B cell (primary cell): ENCODE measurements at regions of chr19 and their contacts with region 1.

Region 1: DNA sequence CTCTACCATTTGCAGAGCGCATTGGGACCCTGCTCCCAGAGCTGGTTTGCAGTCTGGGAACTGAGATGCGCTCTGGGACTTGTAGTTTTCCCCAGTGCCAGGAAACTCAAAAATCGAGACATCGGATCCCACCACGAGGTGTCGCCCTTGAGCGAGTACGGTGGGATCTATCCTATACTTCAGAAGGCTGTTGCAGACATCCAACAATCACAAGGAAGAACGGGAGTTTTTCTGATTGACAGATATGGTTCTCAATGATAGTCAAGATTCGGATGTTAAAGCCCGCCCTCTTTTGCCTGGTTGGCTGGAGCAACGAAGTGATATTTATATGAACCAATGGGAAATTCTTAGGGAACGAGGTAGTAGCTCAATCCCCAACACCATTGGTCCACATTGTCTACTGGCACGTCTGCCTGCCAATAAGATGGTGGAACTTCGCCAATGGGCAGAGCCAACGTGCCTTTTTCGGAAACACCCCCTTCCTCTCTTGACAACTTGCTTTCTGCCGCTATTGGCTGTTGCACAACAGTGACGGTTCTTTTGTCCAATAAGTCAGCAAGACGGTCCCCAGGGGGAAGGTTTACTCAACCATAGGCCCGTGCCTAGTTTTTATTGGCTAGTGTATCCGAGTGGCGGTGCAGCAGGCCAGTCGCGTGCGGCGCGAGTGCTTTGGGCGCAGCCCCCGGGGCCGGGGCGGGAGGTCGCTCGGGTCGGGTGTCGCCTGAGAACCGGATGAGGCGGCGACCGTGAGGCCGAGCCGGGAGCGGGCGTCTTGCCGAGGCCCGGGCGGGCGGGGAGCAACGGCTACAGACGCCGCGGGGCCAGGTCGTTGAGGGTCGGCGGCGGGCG is at the start of gene DNM2:
- DNase-seq: peak; percentile 100
- ATAC-seq: peak; percentile 84
- H3K4me3 ChIP-seq: peak within 1 kb of the TSS; percentile 75 to 96 (median 84)
- H3K4me3 Mint-ChIP-seq: peak within 1 kb of the TSS; percentile 95
- H3K27ac ChIP-seq: peak within 1 kb of the TSS; percentile 47 to 89
- H3K27ac Mint-ChIP-seq: peak within 1 kb of the TSS; percentile 92
- H3K4me1 ChIP-seq: peaks cover 18 to 49% of the 10 kb centered on the region in 2 donors
- H3K4me1 Mint-ChIP-seq: peaks cover 50% of the 10 kb centered on the region
- H3K27me3 ChIP-seq: no peaks in the 10 kb centered on the region
- H3K27me3 Mint-ChIP-seq: no peaks in the 10 kb centered on the region
- CTCF ChIP-seq: peak; percentile 77
- total RNA-seq, gene DNM2: 353 and 393 TPM in 2 replicates

Region 2: GRCh38 chr19:10368101-10368803 is 349.3 kb before region 1 on chr19:
- CTCF ChIA-PET with region 1: no interaction called
- POLR2A ChIA-PET with region 1: no interaction called
- intact Hi-C with region 1: no loop called
- DNase-seq: no peak
- ATAC-seq: no peak
- H3K4me3 ChIP-seq: no peak overlapping the region
- H3K4me3 Mint-ChIP-seq: no peak overlapping the region
- H3K27ac ChIP-seq: no peak overlapping the region
- H3K27ac Mint-ChIP-seq: no peak overlapping the region
- H3K4me1 ChIP-seq: peaks cover under 1 to 3% of the 10 kb centered on the region in 2 donors
- H3K4me1 Mint-ChIP-seq: no peaks in the 10 kb centered on the region
- H3K27me3 ChIP-seq: no peaks in the 10 kb centered on the region
- H3K27me3 Mint-ChIP-seq: no peaks in the 10 kb centered on the region
- CTCF ChIP-seq: no peak

Region 3: GRCh38 chr19:10533646-10534386 is 183.8 kb before region 1 on chr19:
- CTCF ChIA-PET with region 1: no interaction called
- POLR2A ChIA-PET with region 1: no interaction called
- intact Hi-C with region 1: no loop called
- DNase-seq: no peak
- ATAC-seq: no peak
- H3K4me3 ChIP-seq: no peak overlapping the region
- H3K4me3 Mint-ChIP-seq: no peak overlapping the region
- H3K27ac ChIP-seq: no peak overlapping the region
- H3K27ac Mint-ChIP-seq: no peak overlapping the region
- H3K4me1 ChIP-seq: no peaks in the 10 kb centered on the region
- H3K4me1 Mint-ChIP-seq: peaks cover under 1% of the 10 kb centered on the region
- H3K27me3 ChIP-seq: peaks cover 0 to 12% (median 1%) of the 10 kb centered on the region in 4 experiments
- H3K27me3 Mint-ChIP-seq: peaks cover 16% of the 10 kb centered on the region
- CTCF ChIP-seq: no peak

Region 4: DNA sequence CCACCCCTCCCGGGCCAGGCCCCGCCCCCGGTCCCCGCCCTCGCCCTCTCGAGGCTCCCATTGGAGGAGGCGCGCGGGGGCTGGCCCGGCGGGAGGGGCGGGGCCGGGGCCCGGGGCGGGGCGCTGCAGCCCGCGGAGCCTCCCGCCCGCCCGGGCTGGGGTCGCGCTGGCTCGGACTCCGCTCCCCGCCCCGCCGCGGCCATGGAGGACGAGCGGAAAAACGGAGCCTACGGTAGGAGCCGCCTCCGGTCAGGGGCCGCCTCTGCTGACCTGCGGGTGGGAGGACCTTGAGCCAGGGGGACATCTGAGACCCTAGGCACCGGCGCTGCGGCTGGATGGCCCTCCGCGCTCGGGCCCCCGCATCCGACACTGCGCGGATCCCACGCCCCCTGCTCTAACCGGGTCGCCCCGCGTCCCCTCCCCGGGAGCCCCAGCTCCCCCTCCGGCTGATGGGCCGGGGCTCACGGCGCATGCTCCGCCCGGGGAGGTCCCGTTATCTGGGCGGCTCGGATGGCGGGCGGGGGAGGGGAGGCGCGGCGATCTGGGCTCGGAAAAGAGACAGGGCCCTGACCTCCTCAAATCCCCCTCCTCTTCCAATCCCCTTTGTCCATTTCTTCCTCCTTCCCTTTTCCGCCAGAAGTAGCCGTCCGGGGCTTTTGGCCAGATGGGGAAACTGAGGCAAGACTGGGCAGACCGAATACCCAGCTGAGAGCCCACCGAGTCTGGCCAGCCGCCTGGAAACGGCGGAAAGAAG is 115.1 kb before region 1 on chr19:
- CTCF ChIA-PET with region 1: no interaction called
- POLR2A ChIA-PET with region 1: no interaction called
- intact Hi-C with region 1: no loop called
- DNase-seq: peak; percentile 86
- ATAC-seq: peak; percentile 73
- H3K4me3 ChIP-seq: peak overlapping the region; percentile 89 to 100 (median 94)
- H3K4me3 Mint-ChIP-seq: peak overlapping the region; percentile 96
- H3K27ac ChIP-seq: peak overlapping the region; percentile 97 to 99
- H3K27ac Mint-ChIP-seq: peak overlapping the region; percentile 99
- H3K4me1 ChIP-seq: peaks cover 30 to 47% of the 10 kb centered on the region in 2 donors
- H3K4me1 Mint-ChIP-seq: peaks cover 37% of the 10 kb centered on the region
- H3K27me3 ChIP-seq: no peaks in the 10 kb centered on the region
- H3K27me3 Mint-ChIP-seq: no peaks in the 10 kb centered on the region
- CTCF ChIP-seq: no peak

Region 5: GRCh38 chr19:10685210-10685609 is 32.4 kb before region 1 on chr19:
- CTCF ChIA-PET with region 1: no interaction called
- POLR2A ChIA-PET with region 1: no interaction called
- intact Hi-C with region 1: no loop called
- DNase-seq: no peak
- ATAC-seq: no peak
- H3K4me3 ChIP-seq: no peak overlapping the region
- H3K4me3 Mint-ChIP-seq: no peak overlapping the region
- H3K27ac ChIP-seq: no peak overlapping the region
- H3K27ac Mint-ChIP-seq: no peak overlapping the region
- H3K4me1 ChIP-seq: no peaks in the 10 kb centered on the region
- H3K4me1 Mint-ChIP-seq: no peaks in the 10 kb centered on the region
- H3K27me3 ChIP-seq: no peaks in the 10 kb centered on the region
- H3K27me3 Mint-ChIP-seq: no peaks in the 10 kb centered on the region
- CTCF ChIP-seq: no peak

Region 6: GRCh38 chr19:10695401-10696398 is 21.9 kb before region 1 on chr19:
- CTCF ChIA-PET with region 1: interaction called, 25 read pairs
- POLR2A ChIA-PET with region 1: interaction called, 10 read pairs
- intact Hi-C with region 1: loop called (anchors 2 kb)
- DNase-seq: peak; percentile 90
- ATAC-seq: peak; percentile 98
- H3K4me3 ChIP-seq: peak overlapping the region; percentile 6 to 54 (median 25)
- H3K4me3 Mint-ChIP-seq: peak overlapping the region; percentile 80
- H3K27ac ChIP-seq: no peak overlapping the region
- H3K27ac Mint-ChIP-seq: peak overlapping the region; percentile 67
- H3K4me1 ChIP-seq: peaks cover 10 to 15% of the 10 kb centered on the region in 2 donors
- H3K4me1 Mint-ChIP-seq: peaks cover 17% of the 10 kb centered on the region
- H3K27me3 ChIP-seq: no peaks in the 10 kb centered on the region
- H3K27me3 Mint-ChIP-seq: no peaks in the 10 kb centered on the region
- CTCF ChIP-seq: no peak

Region 7: DNA sequence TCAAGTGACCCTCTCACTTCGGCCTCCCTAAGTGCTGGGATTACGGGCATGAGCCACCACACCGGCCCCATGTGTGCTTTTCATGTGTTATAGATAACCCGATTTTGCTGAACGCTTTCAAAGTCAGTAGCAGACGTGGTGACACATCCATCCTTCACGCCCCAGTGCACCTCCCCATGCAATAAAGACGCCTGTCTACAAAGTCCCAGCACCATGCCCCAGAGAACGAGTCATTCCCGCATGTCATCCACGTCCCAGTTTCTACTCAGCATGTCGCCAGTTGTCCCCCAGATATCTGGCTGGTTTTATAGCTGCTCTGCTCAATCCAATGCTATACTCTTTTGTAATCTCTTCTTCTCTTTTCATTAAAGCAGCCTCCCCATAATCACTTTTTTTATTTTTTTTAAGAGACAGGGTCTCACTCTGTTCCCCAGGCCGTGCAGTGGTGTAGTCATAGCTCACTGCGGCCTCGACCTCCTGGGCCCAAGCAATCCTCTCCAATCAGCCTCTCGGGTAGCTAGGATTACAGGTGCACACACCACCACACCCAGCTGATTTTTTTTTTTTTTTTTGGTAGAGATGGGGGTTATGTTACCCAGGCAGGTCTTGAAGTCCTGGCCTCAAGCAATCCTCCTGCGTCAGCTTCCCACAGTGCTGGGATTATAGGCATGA is 42.8 kb after region 1 on chr19:
- CTCF ChIA-PET with region 1: interaction called, 31 read pairs
- POLR2A ChIA-PET with region 1: interaction called, 23 read pairs
- intact Hi-C with region 1: loop called (anchors 1 kb)
- DNase-seq: peak; percentile 78
- ATAC-seq: peak; percentile 56
- H3K4me3 ChIP-seq: peak overlapping the region in 4 of 5 experiments; percentile 14 to 57 (median 28)
- H3K4me3 Mint-ChIP-seq: peak overlapping the region; percentile 85
- H3K27ac ChIP-seq: peak overlapping the region; percentile 86 to 92
- H3K27ac Mint-ChIP-seq: peak overlapping the region; percentile 94
- H3K4me1 ChIP-seq: peaks cover 63 to 92% of the 10 kb centered on the region in 2 donors
- H3K4me1 Mint-ChIP-seq: peaks cover 82% of the 10 kb centered on the region
- H3K27me3 ChIP-seq: no peaks in the 10 kb centered on the region
- H3K27me3 Mint-ChIP-seq: no peaks in the 10 kb centered on the region
- CTCF ChIP-seq: no peak

Region 8: GRCh38 chr19:10797541-10798256 is 80.1 kb after region 1 on chr19:
- CTCF ChIA-PET with region 1: interaction called, 8 read pairs
- POLR2A ChIA-PET with region 1: no interaction called
- intact Hi-C with region 1: loop called (anchors 1 kb)
- DNase-seq: peak; percentile 49
- ATAC-seq: peak; percentile 87
- H3K4me3 ChIP-seq: no peak overlapping the region
- H3K4me3 Mint-ChIP-seq: peak overlapping the region; percentile 39
- H3K27ac ChIP-seq: peak overlapping the region in 1 of 2 donors; percentile 9
- H3K27ac Mint-ChIP-seq: peak overlapping the region; percentile 89
- H3K4me1 ChIP-seq: peaks cover 0 to 16% of the 10 kb centered on the region in 2 donors
- H3K4me1 Mint-ChIP-seq: peaks cover 13% of the 10 kb centered on the region
- H3K27me3 ChIP-seq: no peaks in the 10 kb centered on the region
- H3K27me3 Mint-ChIP-seq: no peaks in the 10 kb centered on the region
- CTCF ChIP-seq: no peak

Region 9: GRCh38 chr19:10858204-10858828 is 140.7 kb after region 1 on chr19:
- CTCF ChIA-PET with region 1: interaction called, 58 read pairs
- POLR2A ChIA-PET with region 1: interaction called, 4 read pairs
- intact Hi-C with region 1: no loop called
- DNase-seq: peak; percentile 47
- ATAC-seq: no peak
- H3K4me3 ChIP-seq: no peak overlapping the region
- H3K4me3 Mint-ChIP-seq: no peak overlapping the region
- H3K27ac ChIP-seq: no peak overlapping the region
- H3K27ac Mint-ChIP-seq: peak overlapping the region; percentile 46
- H3K4me1 ChIP-seq: no peaks in the 10 kb centered on the region
- H3K4me1 Mint-ChIP-seq: peaks cover 5% of the 10 kb centered on the region
- H3K27me3 ChIP-seq: peaks cover 0 to 2% (median 0%) of the 10 kb centered on the region in 4 experiments
- H3K27me3 Mint-ChIP-seq: no peaks in the 10 kb centered on the region
- CTCF ChIP-seq: peak; percentile 54

Region 10: DNA sequence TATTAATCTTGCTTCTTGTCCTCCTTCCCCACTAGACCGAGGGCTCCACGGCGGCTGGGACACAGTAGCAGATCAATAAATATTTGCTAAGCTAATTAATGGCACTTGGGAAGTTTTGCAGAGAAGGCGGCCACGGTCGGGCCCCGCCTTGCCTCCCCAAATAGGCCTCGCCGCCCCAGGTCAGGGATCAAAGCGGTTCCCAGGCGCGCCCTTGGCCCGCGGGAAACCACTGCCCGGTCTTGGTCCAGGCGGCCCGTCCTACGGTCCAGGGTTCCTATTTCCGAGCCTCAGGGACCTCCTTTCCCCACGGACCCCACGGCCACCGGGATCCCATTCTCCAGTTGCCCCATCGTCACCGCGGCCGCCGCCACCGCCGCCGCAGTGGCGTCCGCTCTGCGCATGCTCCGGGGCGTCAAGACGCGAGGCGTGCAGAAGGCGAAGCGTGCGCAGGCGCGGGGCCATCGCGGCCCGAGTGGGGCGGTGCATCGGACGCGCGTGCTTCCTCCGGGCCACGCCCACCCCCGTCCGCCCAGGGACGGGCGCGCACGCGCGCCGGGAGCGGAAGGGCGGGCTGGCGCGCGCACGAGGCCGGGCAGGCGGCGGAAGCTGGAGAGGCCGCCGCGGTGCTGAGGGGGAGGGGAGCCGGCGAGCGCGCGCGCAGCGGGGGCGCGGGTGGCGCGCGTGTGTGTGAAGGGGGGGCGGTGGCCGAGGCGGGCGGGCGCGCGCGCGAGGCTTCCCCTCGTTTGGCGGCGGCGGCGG is 242.9 kb after region 1 on chr19 and contains the start of gene SMARCA4:
- CTCF ChIA-PET with region 1: no interaction called
- POLR2A ChIA-PET with region 1: no interaction called
- intact Hi-C with region 1: loop called (anchors 2 kb)
- DNase-seq: peak; percentile 99
- ATAC-seq: peak; percentile 84
- H3K4me3 ChIP-seq: peak within 1 kb of the TSS; percentile 67 to 90 (median 80)
- H3K4me3 Mint-ChIP-seq: peak within 1 kb of the TSS; percentile 93
- H3K27ac ChIP-seq: peak within 1 kb of the TSS; percentile 76 to 84
- H3K27ac Mint-ChIP-seq: peak within 1 kb of the TSS; percentile 96
- H3K4me1 ChIP-seq: peaks cover 22 to 37% of the 10 kb centered on the region in 2 donors
- H3K4me1 Mint-ChIP-seq: peaks cover 40% of the 10 kb centered on the region
- H3K27me3 ChIP-seq: no peaks in the 10 kb centered on the region
- H3K27me3 Mint-ChIP-seq: no peaks in the 10 kb centered on the region
- CTCF ChIP-seq: no peak
- total RNA-seq, gene SMARCA4: 82.3 and 82.7 TPM in 2 replicates